CD8-positive, alpha-beta memory T cell (primary cell): ENCODE measurements at regions of chr3 and their contacts with region 1.

Region 1: DNA sequence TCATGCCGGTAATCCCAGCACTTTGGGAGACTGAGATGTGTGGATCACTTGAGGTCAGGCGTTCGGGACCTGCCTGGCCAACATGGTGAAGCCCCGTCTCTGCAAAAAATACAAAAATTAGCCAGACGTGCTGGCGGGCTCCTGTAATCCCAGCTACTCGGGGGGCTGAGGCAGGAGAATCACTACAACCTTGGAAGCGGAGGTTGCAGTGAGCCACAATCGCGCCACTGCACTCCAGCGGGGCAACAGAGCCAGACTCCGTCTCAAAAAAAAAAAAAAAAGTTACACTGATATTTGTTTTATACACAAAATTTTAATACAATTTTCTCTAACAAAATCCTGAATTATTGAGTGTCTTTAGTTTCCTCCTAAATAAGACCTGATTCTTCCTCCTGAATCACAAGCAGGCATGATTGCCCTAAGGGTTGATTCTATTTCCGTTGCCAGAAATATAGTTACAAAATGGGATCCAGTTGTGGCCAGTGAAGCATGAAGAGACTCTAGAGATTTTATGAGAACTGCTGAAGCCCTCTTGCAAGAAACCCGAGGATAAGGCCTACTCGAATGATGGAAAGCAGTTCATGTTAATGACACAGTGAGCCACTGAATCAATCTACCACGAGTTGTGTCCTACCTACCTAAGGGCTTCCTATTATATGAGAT is 9.6 kb upstream of the SMARCC1 start:
- DNase-seq: no peak
- H3K4me3 ChIP-seq: no peak overlapping the region
- H3K4me3 Mint-ChIP-seq: peak overlapping the region in 1 of 7 donors; percentile 56
- H3K27ac ChIP-seq: no peak overlapping the region
- H3K27ac Mint-ChIP-seq: peak overlapping the region in 1 of 8 donors; percentile 6
- H3K4me1 ChIP-seq: no peaks in the 10 kb centered on the region
- H3K4me1 Mint-ChIP-seq: peaks cover 3 to 5% (median 4%) of the 10 kb centered on the region in 3 donors
- H3K27me3 ChIP-seq: no peaks in the 10 kb centered on the region
- H3K27me3 Mint-ChIP-seq: no peaks in the 10 kb centered on the region

Region 2: DNA sequence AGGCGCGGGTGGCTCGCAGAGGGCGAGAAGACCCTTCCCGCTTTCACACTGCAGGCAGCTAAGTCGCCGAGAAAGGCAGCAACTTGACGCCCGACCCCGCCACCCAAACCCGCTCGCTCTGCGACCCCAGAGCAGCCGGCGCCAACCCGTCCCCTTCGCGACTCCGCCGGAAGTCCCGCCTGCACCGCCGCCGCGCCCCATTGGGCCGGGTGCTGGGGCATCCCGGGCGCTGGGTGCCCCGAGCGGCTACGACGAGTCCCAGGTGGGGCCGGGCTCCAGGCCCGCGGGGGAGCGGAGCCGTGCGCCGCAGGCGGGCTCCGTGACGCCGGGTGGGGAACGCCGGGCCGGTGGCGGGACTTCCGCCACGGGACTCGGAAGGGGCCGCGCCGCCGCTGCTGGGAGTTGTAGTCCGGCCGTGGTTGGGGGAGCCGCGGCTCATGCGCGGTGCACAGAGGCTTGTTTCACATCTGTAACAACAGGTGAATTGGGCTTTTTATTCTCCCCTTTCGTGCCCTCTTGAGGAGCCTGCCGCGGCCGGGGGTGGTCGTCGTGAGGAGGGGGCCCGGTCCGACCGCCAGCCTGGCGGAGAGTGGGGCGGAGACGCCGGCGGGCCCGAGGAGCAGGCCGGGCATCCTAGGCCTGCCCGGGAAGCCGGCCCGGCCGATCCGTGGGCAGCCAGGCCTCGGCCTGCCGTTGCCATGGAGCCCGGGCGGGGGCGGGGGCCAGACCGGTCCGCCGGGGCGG is 11.6 kb after region 1 on chr3 and contains the start of gene DHX30:
- CTCF ChIA-PET with region 1: interaction called, 10 read pairs
- POLR2A ChIA-PET with region 1: interaction called, 3 read pairs
- DNase-seq: peak; percentile 79 to 86 (median 81)
- H3K4me3 ChIP-seq: peak within 1 kb of the TSS; percentile 72
- H3K4me3 Mint-ChIP-seq: peak within 1 kb of the TSS; percentile 91 to 97 (median 94)
- H3K27ac ChIP-seq: peak within 1 kb of the TSS; percentile 76
- H3K27ac Mint-ChIP-seq: peak within 1 kb of the TSS; percentile 89 to 99 (median 96)
- H3K4me1 ChIP-seq: peaks cover 23% of the 10 kb centered on the region
- H3K4me1 Mint-ChIP-seq: peaks cover 16 to 26% (median 26%) of the 10 kb centered on the region in 3 donors
- H3K27me3 ChIP-seq: no peaks in the 10 kb centered on the region
- H3K27me3 Mint-ChIP-seq: no peaks in the 10 kb centered on the region
- total RNA-seq, gene DHX30: 117 TPM

Region 3: DNA sequence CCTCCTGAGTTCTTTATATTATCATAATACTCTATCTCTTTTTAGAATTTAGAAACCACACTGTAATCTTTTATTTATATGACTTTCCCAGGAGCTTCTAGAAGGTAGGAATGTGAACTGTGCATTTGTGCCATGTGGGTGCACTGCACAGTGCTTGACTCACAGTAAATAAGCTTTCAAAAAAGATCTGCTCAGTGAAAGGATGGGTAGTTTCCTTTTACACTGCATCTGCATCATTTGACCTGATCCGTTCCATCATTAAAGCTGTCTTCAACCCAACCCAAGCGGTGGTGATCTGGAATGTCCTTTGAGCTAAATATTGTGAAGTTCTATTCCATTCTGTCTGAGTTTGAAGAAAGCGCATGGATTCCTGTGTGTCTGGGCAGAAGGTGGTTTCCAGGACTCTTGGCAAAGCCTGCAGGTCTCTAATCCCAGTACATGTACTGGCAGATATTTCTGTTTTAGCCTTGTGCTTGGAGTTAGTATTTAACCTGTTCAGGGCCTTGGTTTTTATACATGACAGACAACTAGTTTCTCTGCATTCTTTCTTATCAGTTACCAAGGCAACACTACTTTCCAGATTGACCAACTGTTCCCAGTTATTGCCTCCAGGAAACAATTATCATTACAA is 108.3 kb after region 1 on chr3:
- CTCF ChIA-PET with region 1: no interaction called
- POLR2A ChIA-PET with region 1: no interaction called
- DNase-seq: no peak
- H3K4me3 ChIP-seq: no peak overlapping the region
- H3K4me3 Mint-ChIP-seq: no peak overlapping the region
- H3K27ac ChIP-seq: no peak overlapping the region
- H3K27ac Mint-ChIP-seq: peak overlapping the region in 2 of 8 donors; percentile 17 to 68
- H3K4me1 ChIP-seq: no peaks in the 10 kb centered on the region
- H3K4me1 Mint-ChIP-seq: peaks cover 0 to 8% (median 4%) of the 10 kb centered on the region in 3 donors
- H3K27me3 ChIP-seq: no peaks in the 10 kb centered on the region
- H3K27me3 Mint-ChIP-seq: no peaks in the 10 kb centered on the region